ENCODE measurements at regions of chr7 and their contacts with region 1.

Region 1: GRCh38 chr7:47571331-47572093 is 10.4 kb downstream of the TNS3 start:
- DNase-seq: peak; percentile 82 to 99 (median 98)
- H3K4me3 ChIP-seq: peak overlapping the region in 1 of 4 donors; percentile 9
- H3K27ac ChIP-seq: peak overlapping the region; percentile 94 to 95 (median 94)
- H3K4me1 ChIP-seq: peaks cover 54 to 91% of the 10 kb centered on the region in 2 donors
- H3K27me3 ChIP-seq: no peaks in the 10 kb centered on the region
- CTCF ChIP-seq: peak in 3 of 6 experiments; percentile 14 to 20 (median 14)
- POLR2A ChIP-seq: peak in 1 of 2 donors; percentile 84

Region 2: GRCh38 chr7:47435889-47436312 is 135.6 kb before region 1 on chr7:
- intact Hi-C with region 1: loop called (anchors 10 kb)
- DNase-seq: peak; percentile 74 to 94 (median 86)
- H3K4me3 ChIP-seq: no peak overlapping the region
- H3K27ac ChIP-seq: peak overlapping the region in 1 of 5 donors; percentile 2
- H3K4me1 ChIP-seq: peaks cover 0 to 9% of the 10 kb centered on the region in 2 donors
- H3K27me3 ChIP-seq: no peaks in the 10 kb centered on the region
- CTCF ChIP-seq: peak; percentile 72 to 90 (median 84)
- POLR2A ChIP-seq: no peak

Region 3: DNA sequence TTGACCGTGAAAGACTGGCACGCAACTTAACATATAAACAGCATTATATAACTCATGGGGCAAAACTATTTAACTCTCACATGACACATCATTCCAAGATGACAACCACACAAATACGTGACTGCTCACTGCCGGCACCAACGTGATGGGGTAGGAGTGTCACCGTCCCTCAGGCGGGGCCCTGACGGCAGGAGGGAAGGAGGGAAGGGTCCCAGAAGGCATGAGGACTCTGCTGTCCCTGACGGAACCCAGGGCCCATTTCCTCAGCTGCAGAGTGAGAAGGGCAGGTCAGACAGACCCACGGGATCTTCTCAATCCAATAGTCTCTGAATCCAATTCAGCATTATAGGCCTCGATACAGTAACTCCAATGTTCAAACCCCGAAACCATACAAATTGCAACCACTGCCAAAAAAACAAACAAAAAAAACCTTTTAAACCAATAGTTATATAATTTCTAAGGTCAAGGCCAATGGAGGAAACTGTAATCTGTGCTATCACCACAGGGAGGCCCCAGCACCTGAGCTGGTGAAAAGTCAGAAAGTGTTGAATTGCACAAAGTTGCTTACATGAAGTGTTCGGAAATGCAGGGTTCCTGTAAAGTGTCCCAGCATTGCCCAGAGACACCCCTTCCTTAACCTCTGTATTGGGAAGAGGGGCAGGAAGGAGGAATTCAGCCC is 127.0 kb before region 1 on chr7:
- intact Hi-C with region 1: loop called (anchors 10 kb)
- DNase-seq: peak in 4 of 7 donors; percentile 57 to 78 (median 60)
- H3K4me3 ChIP-seq: no peak overlapping the region
- H3K27ac ChIP-seq: peak overlapping the region in 2 of 5 donors; percentile 68 to 98
- H3K4me1 ChIP-seq: peaks cover 16 to 41% of the 10 kb centered on the region in 2 donors
- H3K27me3 ChIP-seq: no peaks in the 10 kb centered on the region
- CTCF ChIP-seq: peak; percentile 18 to 79 (median 65)
- POLR2A ChIP-seq: no peak

Region 4: GRCh38 chr7:47474937-47475878 is 96.3 kb before region 1 on chr7:
- intact Hi-C with region 1: loop called in 1 of 2 experiments (anchors 10 kb)
- DNase-seq: peak; percentile 92 to 99 (median 98)
- H3K4me3 ChIP-seq: no peak overlapping the region
- H3K27ac ChIP-seq: peak overlapping the region; percentile 68 to 96 (median 91)
- H3K4me1 ChIP-seq: peaks cover 45 to 66% of the 10 kb centered on the region in 2 donors
- H3K27me3 ChIP-seq: no peaks in the 10 kb centered on the region
- CTCF ChIP-seq: peak in 5 of 6 experiments; percentile 29 to 62 (median 43)
- POLR2A ChIP-seq: peak in 1 of 2 donors; percentile 90

Region 5: DNA sequence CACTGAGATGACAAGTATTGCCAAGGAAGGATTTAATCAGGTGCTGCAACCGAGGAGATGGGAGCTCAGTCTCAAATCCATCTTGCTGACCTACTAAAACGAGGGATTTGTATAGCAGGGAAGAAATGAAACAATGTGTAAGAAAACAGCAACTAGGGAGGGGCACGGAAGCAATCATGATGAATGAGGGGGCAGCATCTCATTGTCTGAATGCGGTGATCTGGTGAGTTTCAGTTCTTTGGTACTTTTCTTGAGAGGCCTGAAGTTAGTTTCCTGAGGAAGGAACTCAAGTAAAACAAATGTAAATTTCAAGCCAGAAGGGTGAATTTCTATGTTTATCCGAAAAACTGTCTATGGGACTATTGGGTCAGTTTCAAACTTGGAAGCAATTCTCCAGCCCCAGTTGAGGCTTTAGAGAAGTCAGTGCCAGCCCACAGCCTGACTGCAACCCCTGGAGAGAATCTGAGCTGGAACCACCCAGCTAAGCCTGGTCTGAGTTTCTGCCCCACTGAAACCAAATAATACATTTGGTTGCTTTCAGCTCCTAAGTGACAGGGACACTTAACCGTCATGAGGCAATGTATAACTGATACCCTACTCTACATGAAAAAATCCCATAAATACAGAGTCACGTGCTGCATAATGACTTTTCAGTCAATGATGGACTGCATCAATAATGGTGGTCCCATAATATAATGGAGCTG is 56.2 kb after region 1 on chr7:
- intact Hi-C with region 1: no loop called
- DNase-seq: no peak
- H3K4me3 ChIP-seq: no peak overlapping the region
- H3K27ac ChIP-seq: no peak overlapping the region
- H3K4me1 ChIP-seq: no peaks in the 10 kb centered on the region
- H3K27me3 ChIP-seq: no peaks in the 10 kb centered on the region
- CTCF ChIP-seq: no peak
- POLR2A ChIP-seq: no peak